ENCODE measurements at regions of chr21 and their contacts with region 1.

Region 1: GRCh38 chr21:17780539-17780938 is 38.6 kb downstream of the C21orf91 start:
- DNase-seq: no peak
- ATAC-seq: peak; percentile 35
- H3K4me3 Mint-ChIP-seq: peak overlapping the region; percentile 59
- H3K27ac Mint-ChIP-seq: peak overlapping the region; percentile 88
- H3K4me1 Mint-ChIP-seq: peaks cover 73% of the 10 kb centered on the region
- H3K27me3 Mint-ChIP-seq: no peaks in the 10 kb centered on the region

Region 2: DNA sequence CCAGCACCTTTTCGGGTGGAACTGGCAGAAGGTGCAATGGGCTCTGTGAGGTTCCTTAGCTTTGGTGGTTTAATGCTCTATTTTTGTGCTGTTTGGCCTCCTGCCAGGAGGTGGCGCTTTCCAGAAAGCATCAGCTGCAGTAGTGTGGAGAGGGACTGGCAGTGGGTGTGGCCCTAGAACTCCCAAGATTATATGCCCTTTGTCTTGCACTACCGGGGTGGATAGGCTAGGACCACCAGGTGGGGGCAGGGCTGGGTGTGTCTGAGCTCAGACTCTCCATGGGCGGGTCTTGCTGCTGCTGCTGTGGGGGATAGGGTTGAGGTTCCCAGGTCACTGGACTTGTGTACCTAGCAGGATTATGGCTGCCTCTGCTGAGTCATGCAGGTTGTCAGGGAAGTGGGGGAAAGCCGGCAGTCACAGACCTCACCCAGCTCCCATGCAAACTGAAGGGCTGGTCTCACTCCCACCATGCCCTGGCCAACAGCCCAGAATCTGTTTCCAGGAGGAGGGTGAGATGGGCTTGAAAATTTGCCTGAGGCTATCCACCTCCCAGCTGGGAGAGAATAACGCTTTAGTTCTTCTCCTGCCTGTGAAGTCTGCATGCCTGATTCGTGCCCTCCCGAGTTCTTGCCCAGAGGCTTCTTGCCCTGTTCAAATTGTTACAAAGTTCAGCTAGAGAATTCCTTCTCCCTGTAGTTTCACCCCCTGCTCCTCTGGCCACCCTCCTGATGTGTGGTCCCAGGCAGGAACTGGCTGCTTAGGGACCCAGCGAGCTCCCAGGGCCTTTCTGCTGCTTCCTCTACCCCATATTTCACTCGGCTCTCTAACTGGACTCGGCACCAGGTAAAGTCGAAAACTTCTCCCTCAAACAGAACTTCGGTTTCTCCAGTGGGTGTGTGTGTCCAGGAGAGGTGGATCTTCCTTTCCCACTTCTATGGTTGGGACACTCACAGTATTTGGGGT is 91.3 kb before region 1 on chr21:
- POLR2A ChIA-PET with region 1: interaction called, 13 read pairs
- DNase-seq: peak; percentile 62
- ATAC-seq: peak; percentile 45
- H3K4me3 Mint-ChIP-seq: peak overlapping the region; percentile 47
- H3K27ac Mint-ChIP-seq: peak overlapping the region; percentile 66
- H3K4me1 Mint-ChIP-seq: peaks cover 31% of the 10 kb centered on the region
- H3K27me3 Mint-ChIP-seq: peaks cover 4% of the 10 kb centered on the region

Region 3: DNA sequence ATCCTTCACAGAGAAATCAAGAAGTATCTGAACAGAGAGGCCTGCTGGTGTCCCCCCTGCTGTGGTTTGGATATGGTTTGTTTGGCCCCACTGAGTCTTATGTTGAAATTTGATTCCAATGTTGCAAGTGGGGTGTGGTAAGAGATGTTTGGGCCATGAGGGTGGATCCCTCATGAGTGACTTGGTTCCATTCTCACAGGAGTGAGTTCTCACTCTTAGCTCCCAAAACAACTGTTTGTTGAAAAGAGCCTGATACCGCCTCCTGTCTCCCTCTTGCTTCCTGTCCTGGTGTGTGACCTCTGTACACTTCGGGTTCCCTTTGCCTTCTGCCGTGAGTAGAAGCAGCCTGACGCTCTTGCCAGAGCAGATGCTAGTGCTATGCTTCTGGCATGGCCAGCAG is 21.9 kb before region 1 on chr21:
- POLR2A ChIA-PET with region 1: no interaction called
- DNase-seq: no peak
- ATAC-seq: no peak
- H3K4me3 Mint-ChIP-seq: no peak overlapping the region
- H3K27ac Mint-ChIP-seq: no peak overlapping the region
- H3K4me1 Mint-ChIP-seq: peaks cover 4% of the 10 kb centered on the region
- H3K27me3 Mint-ChIP-seq: no peaks in the 10 kb centered on the region

Region 4: GRCh38 chr21:17793246-17794123 is 12.9 kb after region 1 on chr21:
- POLR2A ChIA-PET with region 1: interaction called, 17 read pairs
- DNase-seq: no peak
- ATAC-seq: peak; percentile 55
- H3K4me3 Mint-ChIP-seq: peak overlapping the region; percentile 79
- H3K27ac Mint-ChIP-seq: peak overlapping the region; percentile 85
- H3K4me1 Mint-ChIP-seq: peaks cover 58% of the 10 kb centered on the region
- H3K27me3 Mint-ChIP-seq: no peaks in the 10 kb centered on the region

Region 5: GRCh38 chr21:17805966-17806365 is 25.4 kb after region 1 on chr21:
- POLR2A ChIA-PET with region 1: no interaction called
- DNase-seq: no peak
- ATAC-seq: no peak
- H3K4me3 Mint-ChIP-seq: no peak overlapping the region
- H3K27ac Mint-ChIP-seq: peak overlapping the region; percentile 71
- H3K4me1 Mint-ChIP-seq: peaks cover 22% of the 10 kb centered on the region
- H3K27me3 Mint-ChIP-seq: no peaks in the 10 kb centered on the region

Measured in activated naive CD8-positive, alpha-beta T cell treated with anti-CD3 and anti-CD28 coated beads, Interleukin-2, amount 10 ng/mL, durations not matched to agents 7 days and 5 days (primary cell).